ENCODE measurements at regions of chr17 and their contacts with region 1.

Region 1: DNA sequence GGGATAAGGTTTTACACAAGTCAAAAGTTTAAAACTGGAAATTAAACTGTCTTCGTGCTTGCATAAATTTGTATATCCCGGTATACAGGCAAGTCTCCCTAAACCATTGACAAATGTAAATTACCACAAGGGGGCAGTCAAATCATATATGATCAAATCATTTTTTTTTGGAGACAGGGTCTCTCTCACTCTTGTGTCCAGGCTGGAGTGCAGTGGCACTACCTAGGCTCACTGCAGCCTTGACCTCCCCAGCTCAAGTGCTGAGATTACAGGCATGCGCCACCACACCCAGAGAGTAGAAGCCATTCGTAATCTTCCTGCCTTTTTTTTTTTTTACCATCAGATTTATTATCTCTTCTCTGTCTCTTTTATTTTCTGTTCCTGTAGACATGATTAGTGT is 18.5 kb downstream of the TOP2A start:
- DNase-seq: no peak
- H3K4me3 ChIP-seq: no peak overlapping the region
- H3K27ac ChIP-seq: no peak overlapping the region
- H3K4me1 ChIP-seq: no peaks in the 10 kb centered on the region
- H3K27me3 ChIP-seq: no peaks in the 10 kb centered on the region
- CTCF ChIP-seq: peak; percentile 41 to 55 (median 43)

Region 2: DNA sequence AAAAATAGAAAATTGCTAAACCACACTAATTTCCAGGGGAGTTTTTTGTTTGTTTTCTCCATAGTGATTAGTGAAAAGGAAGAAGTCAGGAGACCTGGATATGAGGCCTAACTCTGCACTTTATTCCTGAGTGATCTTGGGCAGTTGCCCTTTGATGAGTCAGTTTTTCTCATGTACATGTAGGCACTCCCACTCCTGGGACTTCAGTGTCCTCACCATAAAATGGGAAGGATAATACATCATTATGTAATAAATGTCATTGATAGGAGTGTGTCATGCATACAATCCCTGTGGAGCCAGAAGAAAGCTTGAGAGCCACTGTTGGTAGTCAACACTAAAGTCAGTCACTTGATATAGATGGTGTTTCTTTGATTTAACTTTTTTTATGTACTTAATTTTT is 147.6 kb before region 1 on chr17:
- intact Hi-C with region 1: no loop called
- DNase-seq: no peak
- H3K4me3 ChIP-seq: no peak overlapping the region
- H3K27ac ChIP-seq: no peak overlapping the region
- H3K4me1 ChIP-seq: peaks cover 0 to 7% of the 10 kb centered on the region in 2 donors
- H3K27me3 ChIP-seq: no peaks in the 10 kb centered on the region
- CTCF ChIP-seq: no peak

Region 3: GRCh38 chr17:40268141-40268712 is 131.0 kb before region 1 on chr17:
- intact Hi-C with region 1: no loop called
- DNase-seq: no peak
- H3K4me3 ChIP-seq: no peak overlapping the region
- H3K27ac ChIP-seq: no peak overlapping the region
- H3K4me1 ChIP-seq: no peaks in the 10 kb centered on the region
- H3K27me3 ChIP-seq: no peaks in the 10 kb centered on the region
- CTCF ChIP-seq: no peak

Region 4: DNA sequence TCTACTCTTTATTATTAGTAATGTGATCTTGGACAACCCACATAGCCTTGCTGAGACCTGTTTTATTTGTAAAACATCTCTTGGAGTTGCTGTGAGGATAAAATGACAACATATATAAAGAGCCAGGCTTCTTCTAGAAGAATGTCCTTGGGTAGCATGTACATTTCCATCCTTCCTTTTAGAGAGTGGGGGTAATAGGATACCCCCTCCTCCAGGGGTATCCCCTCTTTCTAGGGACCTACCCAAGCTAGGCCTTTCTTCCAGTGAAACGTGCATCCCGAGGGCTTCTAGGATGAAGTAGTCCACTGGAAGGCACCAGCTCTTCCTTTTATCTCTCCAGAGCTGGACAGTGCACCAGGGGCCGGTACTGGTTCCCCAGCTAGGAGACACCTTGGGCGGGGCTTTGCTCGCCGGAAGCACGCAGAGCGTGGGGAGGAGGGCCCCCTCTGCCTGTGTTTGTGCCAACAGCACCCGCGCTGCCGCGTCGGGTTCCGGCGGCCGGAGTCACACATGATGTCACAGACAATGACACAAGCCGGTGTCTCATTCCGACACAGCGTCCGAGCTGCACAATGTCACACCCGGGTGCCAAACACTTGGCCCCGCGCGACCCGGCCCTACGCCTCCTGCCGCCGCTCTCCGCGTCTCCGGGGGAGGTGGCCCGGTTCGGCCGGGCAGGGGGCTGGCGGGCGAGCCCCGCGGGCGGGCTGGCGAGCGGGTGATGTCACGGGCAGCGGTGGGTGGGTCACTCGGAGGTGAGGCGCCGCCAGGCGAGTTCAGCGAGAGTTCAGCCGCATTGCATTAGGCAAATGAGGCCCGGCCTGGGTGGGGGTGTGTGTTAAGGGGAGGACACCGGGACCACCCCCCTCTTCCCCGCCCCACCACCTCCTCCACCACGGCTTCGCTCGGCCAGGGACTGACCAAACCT is 58.0 kb before region 1 on chr17:
- intact Hi-C with region 1: no loop called
- DNase-seq: peak; percentile 88 to 98
- H3K4me3 ChIP-seq: peak overlapping the region; percentile 84 to 91
- H3K27ac ChIP-seq: peak overlapping the region; percentile 92 to 94
- H3K4me1 ChIP-seq: peaks cover 10 to 21% of the 10 kb centered on the region in 2 donors
- H3K27me3 ChIP-seq: no peaks in the 10 kb centered on the region
- CTCF ChIP-seq: no peak

Region 5: GRCh38 chr17:40480501-40481003 is 81.4 kb after region 1 on chr17:
- intact Hi-C with region 1: loop called (anchors 1 kb)
- DNase-seq: no peak
- H3K4me3 ChIP-seq: no peak overlapping the region
- H3K27ac ChIP-seq: no peak overlapping the region
- H3K4me1 ChIP-seq: peaks cover 0 to 4% of the 10 kb centered on the region in 2 donors
- H3K27me3 ChIP-seq: no peaks in the 10 kb centered on the region
- CTCF ChIP-seq: no peak